ENCODE measurements at regions of chr10 and their contacts with region 1.

Region 1: DNA sequence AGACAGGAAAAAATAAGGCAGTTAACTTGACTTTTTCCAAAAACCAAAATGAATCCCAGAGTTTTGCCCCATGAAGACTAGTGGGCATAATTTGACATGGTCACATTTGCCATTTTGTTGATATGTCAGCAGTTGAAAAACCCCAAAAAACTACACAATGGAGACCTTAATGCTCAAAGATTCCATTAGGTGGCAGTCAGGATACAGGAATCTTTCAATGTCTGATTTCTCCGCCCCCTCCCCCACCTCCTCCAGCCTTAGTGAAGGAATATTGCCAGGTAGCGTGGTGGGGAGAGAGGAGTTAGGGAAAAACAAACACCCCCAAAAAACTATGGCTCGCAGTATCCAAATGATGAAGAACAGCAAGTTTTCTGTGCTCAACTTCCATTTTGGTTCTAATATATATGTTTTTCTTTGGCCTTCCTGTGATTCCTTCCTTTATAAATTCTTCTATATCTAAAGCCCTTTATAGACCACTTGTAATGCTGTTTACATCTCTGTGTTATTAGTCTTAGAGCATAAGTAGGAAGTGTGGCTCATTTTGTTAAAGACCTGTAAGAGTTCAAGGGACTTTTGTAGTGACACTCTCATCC is 6.7 kb upstream of the SMNDC1 start:
- DNase-seq: no peak

Region 2: GRCh38 chr10:110547139-110547761 is 235.8 kb after region 1 on chr10:
- intact Hi-C with region 1: loop called (anchors 2 kb)
- DNase-seq: no peak

Region 3: GRCh38 chr10:110610308-110610774 is 298.9 kb after region 1 on chr10:
- intact Hi-C with region 1: loop called (anchors 5 kb)
- DNase-seq: no peak